Heart left ventricle (tissue), 16 donors: ENCODE measurements at regions of chr3 and their contacts with region 1.

Region 1: DNA sequence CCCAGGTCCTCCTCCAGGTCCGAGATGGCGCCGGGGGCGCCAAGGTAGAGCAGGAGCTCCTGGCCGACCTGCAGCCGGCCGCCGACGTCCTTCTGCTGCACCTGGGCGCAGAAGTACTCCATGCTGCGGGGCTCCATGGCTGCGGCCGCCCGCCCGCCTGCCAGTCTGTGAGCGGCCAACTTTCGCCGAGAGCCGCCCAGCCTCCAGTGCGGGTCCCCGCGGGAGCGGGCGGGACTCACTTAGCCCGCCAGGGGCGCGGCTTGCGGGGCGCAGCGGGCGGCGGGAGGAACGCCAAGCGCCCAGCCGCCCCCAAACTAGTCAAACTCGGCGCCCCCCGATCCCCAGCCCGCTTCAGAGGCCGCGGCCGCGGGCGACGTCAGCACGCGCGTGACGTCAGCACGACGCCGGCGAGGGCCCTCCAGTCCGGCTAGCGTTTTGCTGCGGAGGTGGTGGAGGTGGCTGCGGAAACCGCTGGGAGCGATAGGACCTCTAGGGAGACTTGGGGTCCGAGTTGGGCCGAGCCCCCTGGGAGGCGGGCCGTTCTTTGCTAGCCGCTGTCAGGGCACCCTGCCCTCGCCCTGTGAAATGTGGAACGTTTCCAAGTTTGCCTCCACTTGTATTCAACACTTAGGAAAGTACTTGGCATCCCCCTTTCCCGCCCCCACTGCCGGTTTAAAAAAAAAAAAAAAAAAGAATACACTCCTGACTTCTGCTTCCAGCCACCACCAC is at the start of gene CLASP2:
- DNase-seq: peak; percentile 90 to 95 (median 92)
- ATAC-seq: peak; percentile 87 to 98 (median 96)
- H3K4me3 ChIP-seq: peak within 1 kb of the TSS; percentile 73 to 98 (median 90)
- H3K27ac ChIP-seq: peak within 1 kb of the TSS; percentile 90 to 100 (median 96)
- H3K4me1 ChIP-seq: peaks cover 0 to 41% (median 20%) of the 10 kb centered on the region in 12 donors
- H3K27me3 ChIP-seq: no peaks in the 10 kb centered on the region
- CTCF ChIP-seq: peak in 2 of 12 donors; percentile 7 to 15
- POLR2A ChIP-seq: peak in 1 of 2 donors; percentile 83
- total RNA-seq, gene CLASP2: 53.2 to 111 (median 80.5) TPM

Region 2: DNA sequence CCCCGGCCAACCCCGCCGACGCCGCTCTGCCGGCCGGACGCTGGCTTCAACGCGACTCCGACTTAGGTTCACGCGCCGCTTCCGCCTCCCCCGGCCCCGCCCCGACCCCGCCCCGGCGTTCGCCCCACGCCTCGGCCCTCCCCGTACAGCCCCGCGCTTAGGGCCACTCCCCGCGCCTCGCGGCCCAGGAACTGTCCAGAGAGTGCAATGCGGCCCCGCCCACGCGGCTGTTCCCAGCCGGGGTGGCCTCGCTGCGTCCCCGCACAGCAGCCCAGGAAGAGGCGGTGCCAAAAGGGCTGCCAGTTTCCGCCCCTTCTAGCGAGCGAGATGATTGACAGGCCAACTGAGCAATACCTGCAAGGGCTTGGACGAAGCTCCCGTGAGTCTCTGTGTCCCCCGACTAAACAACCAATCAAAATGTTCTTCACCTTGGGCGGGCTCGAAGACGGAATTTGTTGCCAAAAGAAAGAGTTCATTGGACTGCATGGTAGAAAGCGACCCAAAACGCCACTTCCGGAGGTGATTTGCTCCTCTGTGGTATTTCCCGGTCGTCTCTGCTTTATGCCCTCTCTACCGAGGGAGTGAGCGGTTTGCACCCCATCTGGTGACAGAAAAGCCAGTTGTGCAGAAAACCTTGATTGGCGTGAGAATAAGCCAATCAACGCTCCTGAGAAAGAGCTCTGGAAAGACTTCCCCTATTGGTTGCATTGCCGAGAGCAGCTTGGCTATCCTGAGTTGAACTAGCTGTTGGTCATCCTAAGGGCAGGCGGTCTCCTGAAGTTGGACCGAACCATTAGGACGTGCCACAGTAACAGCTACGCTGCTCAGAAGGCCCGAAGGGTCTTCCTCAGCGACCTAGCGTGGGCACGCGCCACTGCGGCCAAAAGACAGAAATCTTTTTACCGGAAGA is 277.5 kb before region 1 on chr3 and contains the start of gene UBP1:
- intact Hi-C with region 1: loop called in 3 of 10 experiments (anchors 5 to 10 kb)
- DNase-seq: peak; percentile 100
- ATAC-seq: peak; percentile 95 to 97 (median 96)
- H3K4me3 ChIP-seq: peak within 1 kb of the TSS; percentile 47 to 97 (median 78)
- H3K27ac ChIP-seq: peak within 1 kb of the TSS; percentile 93 to 100 (median 97)
- H3K4me1 ChIP-seq: peaks cover 5 to 45% (median 36%) of the 10 kb centered on the region in 12 donors
- H3K27me3 ChIP-seq: no peaks in the 10 kb centered on the region
- CTCF ChIP-seq: peak in 2 of 12 donors; percentile 5 to 24
- POLR2A ChIP-seq: peak in 1 of 2 donors; percentile 80
- total RNA-seq, gene UBP1: 33.0 to 53.5 (median 46.6) TPM

Region 3: DNA sequence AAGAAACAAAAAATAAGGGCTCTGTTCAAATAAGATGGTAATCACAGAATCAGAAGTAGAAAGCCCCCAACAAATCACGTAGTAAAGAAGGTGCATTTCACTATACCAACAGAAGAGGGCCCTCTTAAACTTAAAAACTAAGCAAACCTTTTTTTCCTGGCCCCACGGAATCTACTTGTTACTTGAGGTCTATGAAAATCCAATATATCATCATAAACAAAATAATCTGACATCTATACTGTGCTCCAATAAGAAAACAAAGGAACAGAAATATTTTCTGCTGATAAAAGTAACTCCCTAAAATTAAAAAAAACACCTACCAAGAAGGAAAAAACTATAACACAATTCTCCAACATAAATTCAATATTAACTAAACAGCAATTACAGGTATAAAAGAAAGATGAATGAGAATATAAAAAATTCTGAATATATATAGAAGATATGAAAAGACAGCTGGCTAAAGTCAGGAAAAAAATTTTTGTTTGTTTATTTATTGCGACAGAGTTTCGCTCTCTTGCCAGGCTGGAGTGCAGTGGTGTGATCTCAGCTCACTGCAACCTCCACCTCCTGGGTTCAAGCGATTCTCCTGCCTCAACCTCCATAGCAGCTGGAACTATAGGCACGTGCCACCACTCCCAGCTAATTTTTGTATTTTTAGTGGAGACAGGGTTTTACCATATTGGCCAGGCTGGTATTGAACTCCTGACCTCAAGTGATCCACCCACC is 81.7 kb before region 1 on chr3:
- intact Hi-C with region 1: loop called (anchors 2 to 5 kb)
- DNase-seq: no peak
- ATAC-seq: no peak
- H3K4me3 ChIP-seq: no peak overlapping the region
- H3K27ac ChIP-seq: no peak overlapping the region
- H3K4me1 ChIP-seq: peaks cover 0 to 6% (median 0%) of the 10 kb centered on the region in 12 donors
- H3K27me3 ChIP-seq: no peaks in the 10 kb centered on the region
- CTCF ChIP-seq: peak; percentile 38 to 78 (median 66)
- POLR2A ChIP-seq: no peak

Region 4: DNA sequence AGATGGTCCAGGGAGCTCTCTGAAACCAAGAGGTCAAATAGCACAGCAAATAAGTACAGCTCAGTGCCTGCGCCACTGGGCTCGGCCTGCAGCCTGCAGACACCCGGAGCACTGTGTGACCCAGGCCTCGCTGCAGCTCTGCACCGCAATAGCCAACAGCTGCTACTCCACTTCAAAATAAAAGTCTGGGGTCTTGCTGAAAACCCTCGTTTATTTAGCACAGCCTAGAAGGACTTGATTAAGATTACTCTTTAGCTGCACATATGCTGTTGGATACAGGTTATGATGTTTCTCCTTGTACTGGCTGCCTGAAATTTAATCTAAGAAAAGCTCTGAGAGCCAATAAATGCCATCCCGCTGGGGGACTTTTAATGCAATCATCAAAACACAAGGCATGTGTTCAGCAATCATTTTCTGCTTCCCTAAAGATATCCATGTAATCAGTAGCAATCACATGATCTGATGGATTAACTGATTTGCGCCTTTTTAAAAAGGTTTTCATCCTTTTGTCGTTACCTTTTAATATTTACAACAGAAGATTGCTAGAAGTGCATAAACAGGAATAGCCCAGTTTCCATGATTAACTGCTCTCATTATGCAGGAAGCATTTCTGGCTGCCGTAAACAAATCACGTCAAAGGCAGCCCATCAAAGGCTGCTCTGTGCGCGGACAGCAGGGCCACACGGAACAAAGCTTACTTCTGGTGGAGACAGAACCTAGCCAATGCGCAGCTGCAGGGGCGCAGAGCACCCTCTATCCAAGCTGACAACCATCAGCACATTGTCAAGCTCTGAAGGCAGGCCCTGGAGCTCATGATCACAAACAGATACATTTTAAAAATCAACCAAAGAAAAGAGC is 58.8 kb before region 1 on chr3:
- intact Hi-C with region 1: loop called in 4 of 10 experiments (anchors 1 to 5 kb)
- DNase-seq: peak; percentile 75 to 89 (median 84)
- ATAC-seq: peak; percentile 98 to 99 (median 99)
- H3K4me3 ChIP-seq: peak overlapping the region; percentile 19 to 70 (median 56)
- H3K27ac ChIP-seq: peak overlapping the region; percentile 56 to 88 (median 80)
- H3K4me1 ChIP-seq: peaks cover 4 to 34% (median 15%) of the 10 kb centered on the region in 12 donors
- H3K27me3 ChIP-seq: no peaks in the 10 kb centered on the region
- CTCF ChIP-seq: no peak
- POLR2A ChIP-seq: no peak

Region 5: GRCh38 chr3:33787328-33788009 is 69.4 kb after region 1 on chr3:
- intact Hi-C with region 1: loop called in 6 of 10 experiments (anchors 5 kb)
- DNase-seq: peak in 4 of 5 donors; percentile 37 to 47 (median 46)
- ATAC-seq: peak; percentile 73 to 94 (median 91)
- H3K4me3 ChIP-seq: peak overlapping the region in 8 of 12 donors; percentile 23 to 44 (median 37)
- H3K27ac ChIP-seq: no peak overlapping the region
- H3K4me1 ChIP-seq: peaks cover 0 to 6% (median 0%) of the 10 kb centered on the region in 12 donors
- H3K27me3 ChIP-seq: no peaks in the 10 kb centered on the region
- CTCF ChIP-seq: peak; percentile 60 to 85 (median 80)
- POLR2A ChIP-seq: no peak

Region 6: DNA sequence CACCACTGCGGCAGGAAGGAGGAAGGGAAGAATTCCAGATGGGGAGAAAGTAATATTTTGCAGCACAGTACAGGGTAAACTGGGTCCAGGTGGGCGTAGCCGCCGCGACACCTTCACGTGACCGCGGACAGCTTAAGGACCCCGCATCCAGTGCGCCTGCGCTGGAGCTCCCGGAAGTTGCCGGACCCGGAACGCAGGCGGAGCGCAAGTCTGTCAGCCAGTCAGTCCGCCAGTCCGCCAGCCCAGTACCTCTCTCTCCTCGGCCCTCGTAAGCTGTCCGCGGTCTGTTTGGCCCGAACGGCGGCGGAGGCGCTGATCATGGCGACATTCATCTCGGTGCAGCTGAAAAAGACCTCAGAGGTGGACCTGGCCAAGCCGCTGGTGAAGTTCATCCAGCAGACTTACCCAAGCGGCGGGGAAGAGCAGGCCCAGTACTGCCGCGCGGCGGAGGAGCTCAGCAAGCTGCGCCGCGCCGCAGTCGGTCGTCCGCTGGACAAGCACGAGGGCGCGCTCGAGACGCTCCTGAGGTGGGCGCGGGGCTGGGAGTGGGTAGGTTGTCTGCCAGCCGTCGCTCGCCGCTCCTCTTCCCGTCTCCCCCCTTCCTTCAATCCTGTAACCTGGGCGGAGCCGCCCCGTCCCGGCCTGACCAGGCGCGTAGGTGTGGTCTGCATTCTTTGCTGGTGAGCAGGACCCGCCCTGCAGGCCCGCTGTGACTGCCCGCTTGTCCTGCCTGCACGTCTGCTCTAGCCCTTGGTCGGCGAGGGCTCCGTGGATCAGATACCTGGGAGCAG is 80.6 kb after region 1 on chr3 and contains the start of gene PDCD6IP:
- intact Hi-C with region 1: loop called in 1 of 10 experiments (anchors 5 kb)
- DNase-seq: peak; percentile 93 to 98 (median 95)
- ATAC-seq: peak; percentile 93 to 96 (median 96)
- H3K4me3 ChIP-seq: peak within 1 kb of the TSS; percentile 56 to 98 (median 86)
- H3K27ac ChIP-seq: peak within 1 kb of the TSS; percentile 56 to 98 (median 94)
- H3K4me1 ChIP-seq: peaks cover 3 to 53% (median 39%) of the 10 kb centered on the region in 12 donors
- H3K27me3 ChIP-seq: no peaks in the 10 kb centered on the region
- CTCF ChIP-seq: peak in 6 of 12 donors; percentile 9 to 37 (median 25)
- POLR2A ChIP-seq: peak; percentile 38 to 85
- total RNA-seq, gene PDCD6IP: 72.9 to 205 (median 152) TPM